IMR-90 (cell line): ENCODE measurements at regions of chr1 and their contacts with region 1.

Region 1: GRCh38 chr1:62131093-62131725 is 63.4 kb upstream of the L1TD1 start:
- DNase-seq: peak; percentile 61
- ATAC-seq: peak; percentile 98
- H3K4me3 ChIP-seq: no peak overlapping the region
- H3K27ac ChIP-seq: no peak overlapping the region
- H3K4me1 ChIP-seq: no peaks in the 10 kb centered on the region
- H3K27me3 ChIP-seq: no peaks in the 10 kb centered on the region
- CTCF ChIP-seq: peak; percentile 70
- POLR2A ChIP-seq: no peak
- RAD21 ChIP-seq: peak; percentile 66

Region 2: GRCh38 chr1:62144238-62144831 is 13.1 kb after region 1 on chr1:
- CTCF ChIA-PET with region 1: interaction called, 14 read pairs
- POLR2A ChIA-PET with region 1: no interaction called
- dilution Hi-C with region 1: no loop called
- in situ Hi-C with region 1: no loop called
- intact Hi-C with region 1: no loop called
- DNase-seq: peak; percentile 52
- ATAC-seq: peak; percentile 84
- H3K4me3 ChIP-seq: no peak overlapping the region
- H3K27ac ChIP-seq: no peak overlapping the region
- H3K4me1 ChIP-seq: no peaks in the 10 kb centered on the region
- H3K27me3 ChIP-seq: no peaks in the 10 kb centered on the region
- CTCF ChIP-seq: peak; percentile 67
- POLR2A ChIP-seq: no peak
- RAD21 ChIP-seq: peak; percentile 56